Natural killer cell (primary cell): ENCODE measurements at regions of chr3 and their contacts with region 1.

Region 1: GRCh38 chr3:4978204-4978965 is 852 bp upstream of the BHLHE40 start:
- DNase-seq: peak; percentile 85 to 88
- ATAC-seq: peak; percentile 44 to 66 (median 55)
- H3K4me3 ChIP-seq: peak overlapping the region; percentile 86
- H3K4me3 Mint-ChIP-seq: peak overlapping the region; percentile 99
- H3K27ac ChIP-seq: peak overlapping the region; percentile 96
- H3K27ac Mint-ChIP-seq: peak overlapping the region; percentile 98 to 100
- H3K4me1 ChIP-seq: peaks cover 39% of the 10 kb centered on the region
- H3K4me1 Mint-ChIP-seq: peaks cover 60 to 61% of the 10 kb centered on the region in 2 donors
- H3K27me3 ChIP-seq: no peaks in the 10 kb centered on the region
- H3K27me3 Mint-ChIP-seq: no peaks in the 10 kb centered on the region
- CTCF ChIP-seq: no peak

Region 2: DNA sequence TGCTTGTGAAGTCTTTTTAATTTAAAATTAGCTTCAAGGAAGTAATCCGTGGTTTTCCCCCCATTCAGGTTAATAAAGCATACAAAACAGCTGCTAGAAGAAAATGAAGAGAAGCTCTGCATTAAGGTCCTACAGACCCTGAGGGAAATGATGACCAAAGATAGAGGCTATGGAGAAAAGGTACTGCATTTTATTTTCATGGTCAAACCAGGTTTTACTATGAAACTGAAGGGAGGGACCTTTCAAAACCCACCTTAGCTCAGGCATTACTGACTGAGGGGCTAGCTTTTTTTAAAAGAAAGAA is 266.7 kb before region 1 on chr3:
- intact Hi-C with region 1: loop called (anchors 1 kb)
- DNase-seq: no peak
- ATAC-seq: no peak
- H3K4me3 ChIP-seq: no peak overlapping the region
- H3K4me3 Mint-ChIP-seq: no peak overlapping the region
- H3K27ac ChIP-seq: no peak overlapping the region
- H3K27ac Mint-ChIP-seq: peak overlapping the region in 1 of 2 donors; percentile 10
- H3K4me1 ChIP-seq: no peaks in the 10 kb centered on the region
- H3K4me1 Mint-ChIP-seq: peaks cover 3 to 7% of the 10 kb centered on the region in 2 donors
- H3K27me3 ChIP-seq: no peaks in the 10 kb centered on the region
- H3K27me3 Mint-ChIP-seq: no peaks in the 10 kb centered on the region
- CTCF ChIP-seq: peak; percentile 23

Region 3: GRCh38 chr3:4748701-4749378 is 229.5 kb before region 1 on chr3:
- intact Hi-C with region 1: loop called (anchors 2 kb)
- DNase-seq: peak; percentile 33 to 60
- ATAC-seq: peak; percentile 74 to 84 (median 80)
- H3K4me3 ChIP-seq: peak overlapping the region; percentile 7
- H3K4me3 Mint-ChIP-seq: peak overlapping the region; percentile 85
- H3K27ac ChIP-seq: peak overlapping the region; percentile 84
- H3K27ac Mint-ChIP-seq: peak overlapping the region; percentile 92 to 97
- H3K4me1 ChIP-seq: peaks cover 58% of the 10 kb centered on the region
- H3K4me1 Mint-ChIP-seq: peaks cover 84 to 85% of the 10 kb centered on the region in 2 donors
- H3K27me3 ChIP-seq: no peaks in the 10 kb centered on the region
- H3K27me3 Mint-ChIP-seq: no peaks in the 10 kb centered on the region
- CTCF ChIP-seq: no peak

Region 4: GRCh38 chr3:4850928-4851265 is 127.5 kb before region 1 on chr3:
- intact Hi-C with region 1: loop called (anchors 1 kb)
- DNase-seq: peak in 1 of 2 donors; percentile 84
- ATAC-seq: peak; percentile 82 to 86 (median 83)
- H3K4me3 ChIP-seq: no peak overlapping the region
- H3K4me3 Mint-ChIP-seq: peak overlapping the region; percentile 42
- H3K27ac ChIP-seq: peak overlapping the region; percentile 98
- H3K27ac Mint-ChIP-seq: peak overlapping the region; percentile 79 to 96
- H3K4me1 ChIP-seq: peaks cover 39% of the 10 kb centered on the region
- H3K4me1 Mint-ChIP-seq: peaks cover 72 to 75% of the 10 kb centered on the region in 2 donors
- H3K27me3 ChIP-seq: no peaks in the 10 kb centered on the region
- H3K27me3 Mint-ChIP-seq: no peaks in the 10 kb centered on the region
- CTCF ChIP-seq: no peak

Region 5: DNA sequence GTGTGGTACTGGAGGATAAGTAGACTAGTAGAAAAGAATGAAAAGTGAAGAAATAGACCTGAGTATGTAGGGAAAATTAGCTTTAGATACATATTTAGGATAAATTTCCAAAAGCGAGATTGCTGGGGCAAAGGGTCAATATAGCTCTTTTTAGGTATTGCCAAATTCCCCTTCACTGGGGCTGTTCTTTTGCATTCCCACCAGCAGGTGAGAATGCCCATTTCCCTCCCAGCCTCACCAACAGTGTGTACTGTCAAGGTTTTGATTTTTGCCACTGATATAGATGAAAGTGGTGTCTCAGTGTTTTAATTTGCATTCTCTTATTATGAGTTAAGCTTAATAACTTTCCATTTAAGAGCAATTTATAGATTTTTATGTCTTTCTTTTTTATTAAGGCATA is 34.8 kb before region 1 on chr3:
- intact Hi-C with region 1: no loop called
- DNase-seq: peak in 1 of 2 donors; percentile 33
- ATAC-seq: no peak
- H3K4me3 ChIP-seq: no peak overlapping the region
- H3K4me3 Mint-ChIP-seq: no peak overlapping the region
- H3K27ac ChIP-seq: no peak overlapping the region
- H3K27ac Mint-ChIP-seq: no peak overlapping the region
- H3K4me1 ChIP-seq: no peaks in the 10 kb centered on the region
- H3K4me1 Mint-ChIP-seq: peaks cover 4% of the 10 kb centered on the region in 2 donors
- H3K27me3 ChIP-seq: no peaks in the 10 kb centered on the region
- H3K27me3 Mint-ChIP-seq: no peaks in the 10 kb centered on the region
- CTCF ChIP-seq: no peak

Region 6: GRCh38 chr3:5006755-5007202 is 28.4 kb after region 1 on chr3:
- intact Hi-C with region 1: loop called (anchors 1 kb)
- DNase-seq: peak; percentile 79 to 93
- ATAC-seq: peak; percentile 80 to 89 (median 82)
- H3K4me3 ChIP-seq: no peak overlapping the region
- H3K4me3 Mint-ChIP-seq: peak overlapping the region; percentile 3
- H3K27ac ChIP-seq: peak overlapping the region; percentile 75
- H3K27ac Mint-ChIP-seq: peak overlapping the region; percentile 93 to 96
- H3K4me1 ChIP-seq: peaks cover 77% of the 10 kb centered on the region
- H3K4me1 Mint-ChIP-seq: peaks cover 43 to 49% of the 10 kb centered on the region in 2 donors
- H3K27me3 ChIP-seq: no peaks in the 10 kb centered on the region
- H3K27me3 Mint-ChIP-seq: no peaks in the 10 kb centered on the region
- CTCF ChIP-seq: no peak